Activated B cell treated with CpG ODN at 0.5 μM for 24 hours (primary cell): ENCODE measurements at regions of chr14 and their contacts with region 1.

Region 1: GRCh38 chr14:75560962-75561432 is 17.4 kb upstream of the FLVCR2 start:
- DNase-seq: no peak
- ATAC-seq: peak; percentile 46
- H3K4me3 Mint-ChIP-seq: peak overlapping the region; percentile 42
- H3K27ac Mint-ChIP-seq: peak overlapping the region; percentile 41
- H3K4me1 Mint-ChIP-seq: peaks cover 37% of the 10 kb centered on the region
- H3K27me3 Mint-ChIP-seq: no peaks in the 10 kb centered on the region
- CTCF ChIP-seq: peak; percentile 40

Region 2: DNA sequence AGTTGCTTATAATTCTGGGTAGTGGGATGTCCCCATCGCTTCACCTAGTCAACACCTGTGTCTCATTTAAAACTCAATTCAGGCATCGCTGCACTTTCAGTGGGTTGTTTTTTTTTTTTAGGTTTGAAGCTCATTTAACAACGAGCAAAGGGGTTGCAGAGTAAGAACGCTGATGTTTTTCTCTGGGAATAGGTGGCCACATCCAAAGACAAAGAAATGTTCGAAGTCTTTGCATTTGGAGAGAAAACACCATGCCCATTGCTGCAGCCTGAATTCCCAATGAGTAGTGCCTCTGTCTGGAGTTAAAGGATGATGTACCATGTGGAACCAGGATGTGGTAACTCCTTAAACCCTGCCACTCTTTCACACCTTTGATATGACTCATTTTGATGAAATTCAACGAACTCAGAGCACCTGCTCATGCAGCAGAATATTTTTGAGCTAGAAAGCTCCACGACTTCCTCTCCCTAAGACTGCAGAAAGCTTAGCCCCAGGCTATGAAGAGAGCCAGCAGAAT is 73.8 kb before region 1 on chr14:
- CTCF ChIA-PET with region 1: interaction called, 42 read pairs
- POLR2A ChIA-PET with region 1: interaction called, 7 read pairs
- intact Hi-C with region 1: loop called (anchors 1 kb)
- DNase-seq: no peak
- ATAC-seq: peak; percentile 66
- H3K4me3 Mint-ChIP-seq: peak overlapping the region; percentile 9
- H3K27ac Mint-ChIP-seq: peak overlapping the region; percentile 42
- H3K4me1 Mint-ChIP-seq: peaks cover 22% of the 10 kb centered on the region
- H3K27me3 Mint-ChIP-seq: no peaks in the 10 kb centered on the region
- CTCF ChIP-seq: no peak

Region 3: GRCh38 chr14:75522224-75522982 is 38.6 kb before region 1 on chr14 and contains the start of gene BATF:
- CTCF ChIA-PET with region 1: interaction called, 22 read pairs
- POLR2A ChIA-PET with region 1: interaction called, 6 read pairs
- intact Hi-C with region 1: loop called (anchors 2 kb)
- DNase-seq: peak; percentile 58
- ATAC-seq: peak; percentile 70
- H3K4me3 Mint-ChIP-seq: peak within 1 kb of the TSS; percentile 100
- H3K27ac Mint-ChIP-seq: peak within 1 kb of the TSS; percentile 98
- H3K4me1 Mint-ChIP-seq: peaks cover 85% of the 10 kb centered on the region
- H3K27me3 Mint-ChIP-seq: no peaks in the 10 kb centered on the region
- CTCF ChIP-seq: no peak
- total RNA-seq, gene BATF: 160 and 171 TPM in 2 replicates

Region 4: DNA sequence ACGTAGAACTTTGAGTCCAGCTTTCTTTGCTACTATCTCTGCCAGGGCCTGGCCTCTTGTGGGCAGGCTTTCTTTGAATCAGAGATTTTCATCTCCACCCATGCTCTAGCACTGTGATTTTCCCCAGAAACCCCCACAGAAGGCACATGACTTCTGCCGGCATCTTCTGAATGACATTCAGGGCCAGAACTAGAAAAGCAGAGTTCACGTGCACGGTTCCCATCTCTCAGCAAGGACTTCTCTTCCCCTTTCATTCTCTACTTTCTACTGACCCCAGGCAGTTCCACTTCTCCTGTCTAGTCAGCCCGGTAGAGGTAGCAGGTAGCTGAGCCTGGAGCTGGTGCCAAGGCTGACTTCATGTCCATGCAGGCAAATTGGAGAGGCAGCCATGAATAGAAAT is 11.8 kb before region 1 on chr14:
- CTCF ChIA-PET with region 1: interaction called, 24 read pairs
- POLR2A ChIA-PET with region 1: interaction called, 13 read pairs
- intact Hi-C with region 1: no loop called
- DNase-seq: no peak
- ATAC-seq: peak; percentile 80
- H3K4me3 Mint-ChIP-seq: peak overlapping the region; percentile 21
- H3K27ac Mint-ChIP-seq: peak overlapping the region; percentile 85
- H3K4me1 Mint-ChIP-seq: peaks cover 69% of the 10 kb centered on the region
- H3K27me3 Mint-ChIP-seq: no peaks in the 10 kb centered on the region
- CTCF ChIP-seq: no peak

Region 5: DNA sequence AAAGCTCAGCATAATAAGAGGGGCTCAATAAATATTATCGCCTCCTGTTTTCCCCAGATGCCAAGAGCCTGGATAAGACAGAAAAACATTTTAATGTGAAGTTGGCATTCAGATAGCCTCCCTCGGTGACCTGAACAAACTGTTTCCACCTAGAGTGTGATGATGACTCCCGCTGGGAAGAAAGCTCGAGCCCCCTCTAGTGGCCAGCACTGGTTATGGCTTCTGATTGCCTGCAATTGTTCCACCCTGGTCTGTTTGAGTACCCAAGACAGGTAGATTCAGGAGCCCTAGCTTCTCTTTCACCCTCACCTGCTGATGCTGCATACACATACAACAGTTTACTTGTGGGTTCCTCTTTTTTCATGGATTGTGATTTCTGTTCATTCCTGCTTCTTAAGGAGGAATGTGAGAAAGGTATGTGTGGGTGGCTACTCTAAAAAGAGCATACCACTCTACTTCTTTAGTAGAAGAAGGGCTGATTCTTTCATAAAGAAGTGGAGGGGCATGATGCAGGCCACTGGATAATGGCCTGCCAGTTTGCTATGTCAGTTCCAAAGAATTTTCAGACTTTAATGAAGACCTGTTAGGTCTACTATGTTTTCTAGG is 93.2 kb after region 1 on chr14:
- CTCF ChIA-PET with region 1: interaction called, 15 read pairs
- POLR2A ChIA-PET with region 1: interaction called, 3 read pairs
- intact Hi-C with region 1: no loop called
- DNase-seq: peak; percentile 72
- ATAC-seq: peak; percentile 96
- H3K4me3 Mint-ChIP-seq: no peak overlapping the region
- H3K27ac Mint-ChIP-seq: no peak overlapping the region
- H3K4me1 Mint-ChIP-seq: peaks cover 1% of the 10 kb centered on the region
- H3K27me3 Mint-ChIP-seq: no peaks in the 10 kb centered on the region
- CTCF ChIP-seq: peak; percentile 87

Region 6: DNA sequence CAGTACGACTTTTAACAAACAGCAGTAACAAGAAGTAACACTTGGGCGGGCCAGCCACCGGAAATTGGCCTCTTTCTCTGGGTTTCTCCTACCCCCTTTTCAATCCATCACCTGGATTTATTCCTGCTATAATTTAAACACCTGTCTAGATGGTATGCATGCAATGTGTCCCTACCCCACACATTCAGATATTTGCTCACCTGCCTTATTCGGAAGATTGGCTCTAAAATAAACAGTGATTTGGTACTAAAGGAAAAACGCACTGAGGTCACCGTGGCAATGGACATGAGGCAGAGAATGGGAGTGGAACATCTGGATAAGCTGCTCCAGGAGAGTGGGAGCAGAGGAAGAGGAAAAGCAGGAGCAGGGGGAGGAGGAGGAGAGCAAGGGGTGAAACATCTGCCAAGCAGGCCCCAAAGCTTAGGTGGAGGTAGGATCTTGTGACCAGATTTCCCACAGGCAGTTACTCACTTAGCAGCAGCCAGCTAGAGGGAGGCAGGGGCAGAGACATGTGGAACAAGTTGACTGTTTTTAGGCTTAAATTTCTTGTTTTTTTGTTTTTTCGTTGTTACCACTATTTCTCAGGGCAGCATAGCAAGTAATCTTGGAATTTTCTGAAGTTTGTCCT is 251.0 kb after region 1 on chr14:
- CTCF ChIA-PET with region 1: no interaction called
- POLR2A ChIA-PET with region 1: no interaction called
- intact Hi-C with region 1: no loop called
- DNase-seq: no peak
- ATAC-seq: no peak
- H3K4me3 Mint-ChIP-seq: no peak overlapping the region
- H3K27ac Mint-ChIP-seq: no peak overlapping the region
- H3K4me1 Mint-ChIP-seq: no peaks in the 10 kb centered on the region
- H3K27me3 Mint-ChIP-seq: no peaks in the 10 kb centered on the region
- CTCF ChIP-seq: no peak